ENCODE measurements at regions of chr4 and their contacts with region 1.

Region 1: GRCh38 chr4:87150498-87151261 is 69.7 kb downstream of the KLHL8 start:
- DNase-seq: peak; percentile 86
- H3K4me3 ChIP-seq: no peak overlapping the region
- H3K27ac ChIP-seq: no peak overlapping the region
- H3K4me1 ChIP-seq: no peaks in the 10 kb centered on the region
- H3K27me3 ChIP-seq: no peaks in the 10 kb centered on the region
- CTCF ChIP-seq: peak; percentile 94

Region 2: DNA sequence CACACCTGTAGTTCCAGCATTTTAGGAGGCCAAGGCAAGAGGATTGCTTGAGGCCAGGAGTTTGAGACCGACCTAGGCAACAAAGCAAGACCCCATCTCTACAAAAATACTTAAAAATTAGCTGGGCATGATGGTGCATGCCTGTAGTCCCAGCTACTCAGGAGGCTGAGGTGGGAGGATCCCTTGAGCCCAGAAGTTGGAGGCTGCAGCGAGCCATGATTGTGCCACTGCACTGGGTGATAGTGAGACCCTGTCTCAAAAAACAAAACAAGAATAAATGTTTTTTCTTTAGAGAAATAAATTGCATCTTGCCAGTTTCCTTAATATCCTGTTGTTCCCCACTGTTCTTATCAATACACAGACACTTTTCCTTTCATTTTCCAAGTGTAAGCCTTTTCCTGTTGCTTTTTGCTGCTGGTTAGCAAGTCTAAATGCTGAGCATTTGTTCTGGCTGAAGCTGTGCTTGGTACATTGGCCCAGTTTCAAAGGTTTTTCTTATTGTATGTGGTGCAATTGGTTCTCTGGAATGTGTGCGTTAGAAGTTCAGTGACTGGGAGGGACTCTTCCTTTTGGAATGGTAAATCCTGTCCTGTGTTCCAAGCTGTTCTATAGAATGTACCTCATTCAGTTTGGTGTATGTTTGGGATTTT is 117.7 kb before region 1 on chr4:
- intact Hi-C with region 1: no loop called
- DNase-seq: no peak
- H3K4me3 ChIP-seq: no peak overlapping the region
- H3K27ac ChIP-seq: peak overlapping the region; percentile 57
- H3K4me1 ChIP-seq: peaks cover 19% of the 10 kb centered on the region
- H3K27me3 ChIP-seq: no peaks in the 10 kb centered on the region
- CTCF ChIP-seq: no peak

Region 3: GRCh38 chr4:87235020-87235671 is 84.5 kb after region 1 on chr4:
- intact Hi-C with region 1: loop called (anchors 5 kb)
- DNase-seq: no peak
- H3K4me3 ChIP-seq: peak overlapping the region; percentile 42
- H3K27ac ChIP-seq: no peak overlapping the region
- H3K4me1 ChIP-seq: peaks cover 4% of the 10 kb centered on the region
- H3K27me3 ChIP-seq: no peaks in the 10 kb centered on the region
- CTCF ChIP-seq: no peak